ENCODE measurements at regions of chr14 and their contacts with region 1.

Region 1: GRCh38 chr14:24431569-24432258 is 2.0 kb downstream of the KHNYN start:
- DNase-seq: peak; percentile 93
- H3K4me3 Mint-ChIP-seq: peak overlapping the region; percentile 80
- H3K27ac Mint-ChIP-seq: peak overlapping the region; percentile 91
- H3K4me1 Mint-ChIP-seq: peaks cover 25% of the 10 kb centered on the region
- H3K27me3 Mint-ChIP-seq: no peaks in the 10 kb centered on the region
- CTCF ChIP-seq: peak; percentile 83

Region 2: DNA sequence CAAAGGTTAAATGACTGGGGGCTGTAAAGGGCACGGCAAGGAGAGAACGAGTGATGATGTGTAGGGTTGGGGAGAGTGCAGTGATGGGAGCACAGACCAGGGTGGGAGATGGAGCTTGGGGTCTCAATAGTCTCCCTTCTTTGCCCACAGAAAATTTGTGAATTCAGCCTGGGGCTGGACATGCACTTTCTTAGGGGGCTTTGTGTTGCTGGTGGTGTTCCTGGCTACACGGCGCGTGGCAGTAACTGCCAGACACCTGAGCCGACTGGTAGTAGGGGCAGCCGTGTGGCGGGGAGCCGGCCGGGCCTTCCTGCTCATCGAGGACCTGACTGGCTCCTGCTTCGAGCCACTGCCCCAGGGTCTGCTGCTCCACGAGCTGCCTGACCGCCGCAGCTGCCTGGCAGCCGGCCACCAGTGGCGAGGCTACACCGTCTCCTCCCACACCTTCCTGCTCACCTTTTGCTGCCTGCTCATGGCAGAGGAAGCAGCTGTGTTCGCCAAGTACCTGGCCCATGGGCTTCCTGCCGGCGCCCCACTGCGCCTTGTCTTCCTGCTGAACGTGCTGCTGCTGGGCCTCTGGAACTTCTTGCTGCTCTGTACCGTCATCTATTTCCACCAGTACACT is 299.5 kb before region 1 on chr14:
- CTCF ChIA-PET with region 1: no interaction called
- POLR2A ChIA-PET with region 1: no interaction called
- intact Hi-C with region 1: no loop called
- DNase-seq: peak; percentile 66
- H3K4me3 Mint-ChIP-seq: no peak overlapping the region
- H3K27ac Mint-ChIP-seq: peak overlapping the region; percentile 71
- H3K4me1 Mint-ChIP-seq: peaks cover 31% of the 10 kb centered on the region
- H3K27me3 Mint-ChIP-seq: no peaks in the 10 kb centered on the region
- CTCF ChIP-seq: no peak

Region 3: DNA sequence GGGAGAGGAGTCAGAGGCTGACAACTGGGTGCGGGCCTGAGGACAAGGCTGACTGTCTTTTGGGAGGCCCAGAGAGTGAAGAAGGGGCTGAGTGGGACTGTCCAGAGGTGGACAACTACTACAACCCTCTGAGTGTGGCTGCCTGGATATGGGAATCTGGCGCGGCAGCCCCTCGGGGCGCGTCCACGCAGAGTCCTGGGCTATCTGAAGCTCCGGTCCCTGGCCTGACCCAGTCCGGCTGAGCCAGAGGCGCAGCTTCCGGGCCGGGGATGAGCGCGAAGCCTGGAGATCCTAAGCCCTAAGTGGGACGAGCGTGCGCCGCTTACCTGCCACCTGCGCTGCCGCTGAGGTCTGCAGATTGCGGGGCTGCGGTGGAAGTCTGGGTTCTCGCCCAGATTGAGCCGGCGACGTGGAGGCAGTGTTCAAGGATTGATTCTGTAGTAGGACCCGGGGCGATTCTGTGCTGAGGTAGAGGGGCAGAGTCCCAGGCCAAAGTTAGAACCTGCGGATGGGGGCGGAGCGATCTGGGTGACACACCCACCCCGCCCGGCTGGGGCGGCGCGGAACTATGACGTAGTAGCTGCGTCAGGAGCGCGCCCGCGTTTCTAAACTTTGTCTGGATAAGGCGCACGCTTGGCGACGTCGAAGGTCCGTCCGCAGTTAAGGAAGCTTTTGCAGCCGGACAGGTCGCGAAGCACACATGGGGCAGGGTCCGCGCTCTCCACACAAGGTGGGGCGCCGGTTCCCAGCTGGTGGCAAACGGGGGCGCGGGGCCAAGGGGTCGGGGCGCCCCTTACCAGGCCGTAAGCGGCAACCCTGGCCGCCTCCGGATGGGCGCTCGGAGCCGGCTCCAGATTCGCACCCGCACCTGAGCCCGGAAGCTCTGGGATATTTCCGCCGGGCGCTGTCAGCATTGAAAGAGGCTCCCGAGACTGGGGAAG is 132.2 kb before region 1 on chr14 and contains the starts of genes DHRS1 and NOP9:
- CTCF ChIA-PET with region 1: interaction called, 15 read pairs
- POLR2A ChIA-PET with region 1: interaction called, 5 read pairs
- intact Hi-C with region 1: no loop called
- DNase-seq: peak; percentile 91
- H3K4me3 Mint-ChIP-seq: peak within 1 kb of the TSS; percentile 95
- H3K27ac Mint-ChIP-seq: peak within 1 kb of the TSS; percentile 78
- H3K4me1 Mint-ChIP-seq: peaks cover 33% of the 10 kb centered on the region
- H3K27me3 Mint-ChIP-seq: no peaks in the 10 kb centered on the region
- CTCF ChIP-seq: no peak
- total RNA-seq, gene DHRS1: 29.2 and 29.7 TPM in 2 replicates
- total RNA-seq, gene NOP9: 29.8 and 31.9 TPM in 2 replicates

Region 4: GRCh38 chr14:24327303-24327702 is 104.4 kb before region 1 on chr14:
- CTCF ChIA-PET with region 1: interaction called, 626 read pairs
- POLR2A ChIA-PET with region 1: interaction called, 52 read pairs
- intact Hi-C with region 1: loop called (anchors 1 kb)
- DNase-seq: no peak
- H3K4me3 Mint-ChIP-seq: no peak overlapping the region
- H3K27ac Mint-ChIP-seq: no peak overlapping the region
- H3K4me1 Mint-ChIP-seq: peaks cover 5% of the 10 kb centered on the region
- H3K27me3 Mint-ChIP-seq: no peaks in the 10 kb centered on the region
- CTCF ChIP-seq: no peak

Region 5: DNA sequence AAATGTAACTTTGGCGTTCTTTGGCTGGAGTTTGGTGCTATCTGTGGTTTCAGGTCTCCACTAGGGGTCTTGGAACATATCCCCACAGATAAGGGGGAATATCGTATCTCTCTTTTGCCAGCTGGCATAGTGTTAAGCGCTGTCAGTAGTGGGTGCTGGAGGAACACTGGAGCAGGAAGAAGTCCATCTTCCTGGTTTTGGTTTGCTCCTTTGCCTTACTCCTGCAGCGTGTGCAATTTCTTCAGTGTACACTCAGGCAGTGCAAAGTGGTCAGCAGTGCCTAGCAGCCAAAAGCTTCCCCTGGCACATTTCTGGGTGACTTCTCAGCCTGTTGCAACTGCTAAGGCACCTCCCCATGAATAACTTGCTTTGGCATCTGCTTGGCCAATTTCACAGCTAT is 80.2 kb before region 1 on chr14:
- CTCF ChIA-PET with region 1: interaction called, 36 read pairs
- POLR2A ChIA-PET with region 1: interaction called, 16 read pairs
- intact Hi-C with region 1: no loop called
- DNase-seq: peak; percentile 45
- H3K4me3 Mint-ChIP-seq: no peak overlapping the region
- H3K27ac Mint-ChIP-seq: no peak overlapping the region
- H3K4me1 Mint-ChIP-seq: peaks cover 18% of the 10 kb centered on the region
- H3K27me3 Mint-ChIP-seq: peaks cover 16% of the 10 kb centered on the region
- CTCF ChIP-seq: no peak

Region 6: DNA sequence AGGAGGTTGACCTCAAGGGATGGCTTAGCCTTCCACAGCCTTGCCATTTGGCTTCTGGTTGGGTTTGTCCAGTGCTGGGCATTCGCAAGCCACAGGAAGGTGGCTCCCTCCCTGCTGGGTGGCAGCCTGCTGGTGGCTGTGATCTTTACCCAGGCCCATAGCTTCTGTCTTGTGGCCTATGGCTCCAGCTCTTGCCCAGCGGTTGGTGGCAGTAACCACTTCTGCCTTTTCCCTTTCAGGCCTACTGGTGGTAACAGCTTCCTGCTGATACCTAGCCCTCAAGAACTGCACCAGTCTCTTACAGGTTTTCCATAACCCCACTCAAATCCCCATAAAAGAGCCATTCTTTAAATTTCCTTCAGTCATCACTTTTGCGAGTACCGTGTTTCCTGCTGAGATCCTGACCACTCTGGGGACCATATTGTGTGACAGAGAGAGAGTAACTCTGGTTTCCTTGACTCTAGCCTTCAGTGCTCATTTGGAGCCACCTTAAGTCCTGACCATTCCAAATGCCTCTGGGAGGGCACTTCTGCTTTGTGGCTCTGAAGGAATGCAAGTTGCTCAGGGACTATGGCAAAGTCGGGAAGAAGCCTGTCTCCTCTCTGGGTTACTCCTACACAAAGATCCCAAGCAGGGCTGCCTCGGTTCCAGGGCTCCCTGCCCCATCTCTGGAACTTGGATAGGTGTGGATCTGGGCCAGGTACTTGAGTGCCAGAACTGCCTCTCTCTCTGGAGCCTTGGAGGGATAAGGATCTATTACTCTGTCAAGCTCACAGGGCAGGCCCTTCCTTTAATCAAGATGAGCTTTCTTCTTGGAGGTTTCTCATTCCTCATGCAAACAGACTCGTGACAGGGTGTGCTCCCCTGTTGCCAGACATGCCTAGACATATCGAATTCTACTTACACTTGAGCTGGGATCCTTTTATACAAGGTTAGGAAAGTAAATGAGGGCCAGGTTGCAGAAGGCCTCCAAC is 35.8 kb before region 1 on chr14:
- CTCF ChIA-PET with region 1: interaction called, 22 read pairs
- POLR2A ChIA-PET with region 1: interaction called, 16 read pairs
- intact Hi-C with region 1: no loop called
- DNase-seq: no peak
- H3K4me3 Mint-ChIP-seq: no peak overlapping the region
- H3K27ac Mint-ChIP-seq: peak overlapping the region; percentile 84
- H3K4me1 Mint-ChIP-seq: peaks cover 28% of the 10 kb centered on the region
- H3K27me3 Mint-ChIP-seq: no peaks in the 10 kb centered on the region
- CTCF ChIP-seq: no peak

Region 7: GRCh38 chr14:24418492-24418873 is 13.2 kb before region 1 on chr14:
- CTCF ChIA-PET with region 1: interaction called, 82 read pairs
- POLR2A ChIA-PET with region 1: interaction called, 9 read pairs
- intact Hi-C with region 1: no loop called
- DNase-seq: peak; percentile 74
- H3K4me3 Mint-ChIP-seq: no peak overlapping the region
- H3K27ac Mint-ChIP-seq: peak overlapping the region; percentile 42
- H3K4me1 Mint-ChIP-seq: peaks cover 11% of the 10 kb centered on the region
- H3K27me3 Mint-ChIP-seq: no peaks in the 10 kb centered on the region
- CTCF ChIP-seq: no peak